Dorsolateral prefrontal cortex (tissue), 120 donors: ENCODE measurements at regions of chr11 and their contacts with region 1.

Region 1: DNA sequence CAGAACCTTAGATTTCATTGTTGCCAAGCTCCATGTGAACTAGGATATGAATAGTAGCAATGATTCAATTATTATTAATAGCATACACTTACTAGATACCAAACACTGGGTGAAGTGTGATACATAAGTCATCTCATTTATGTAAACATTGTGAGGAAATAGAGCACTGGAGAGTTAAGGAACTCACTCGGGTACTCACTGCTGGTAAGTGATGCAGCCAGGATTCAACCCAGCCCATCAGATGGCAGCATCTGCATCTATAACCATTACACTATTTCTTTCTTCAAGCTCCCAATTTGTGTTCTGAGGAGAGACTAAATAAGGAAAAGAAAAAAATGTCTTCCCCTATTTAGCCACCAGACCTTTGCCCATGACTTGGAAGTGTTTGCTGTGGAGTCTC is 10.2 kb upstream of the ALG8 start:
- DNase-seq: peak in 4 of 10 donors; percentile 25 to 61 (median 56)
- H3K4me3 ChIP-seq: no peak overlapping the region
- H3K27ac ChIP-seq: no peak overlapping the region
- H3K27me3 ChIP-seq: no peaks in the 10 kb centered on the region
- CTCF ChIP-seq: peak in 53 of 56 donors; percentile 14 to 73 (median 52)

Region 2: DNA sequence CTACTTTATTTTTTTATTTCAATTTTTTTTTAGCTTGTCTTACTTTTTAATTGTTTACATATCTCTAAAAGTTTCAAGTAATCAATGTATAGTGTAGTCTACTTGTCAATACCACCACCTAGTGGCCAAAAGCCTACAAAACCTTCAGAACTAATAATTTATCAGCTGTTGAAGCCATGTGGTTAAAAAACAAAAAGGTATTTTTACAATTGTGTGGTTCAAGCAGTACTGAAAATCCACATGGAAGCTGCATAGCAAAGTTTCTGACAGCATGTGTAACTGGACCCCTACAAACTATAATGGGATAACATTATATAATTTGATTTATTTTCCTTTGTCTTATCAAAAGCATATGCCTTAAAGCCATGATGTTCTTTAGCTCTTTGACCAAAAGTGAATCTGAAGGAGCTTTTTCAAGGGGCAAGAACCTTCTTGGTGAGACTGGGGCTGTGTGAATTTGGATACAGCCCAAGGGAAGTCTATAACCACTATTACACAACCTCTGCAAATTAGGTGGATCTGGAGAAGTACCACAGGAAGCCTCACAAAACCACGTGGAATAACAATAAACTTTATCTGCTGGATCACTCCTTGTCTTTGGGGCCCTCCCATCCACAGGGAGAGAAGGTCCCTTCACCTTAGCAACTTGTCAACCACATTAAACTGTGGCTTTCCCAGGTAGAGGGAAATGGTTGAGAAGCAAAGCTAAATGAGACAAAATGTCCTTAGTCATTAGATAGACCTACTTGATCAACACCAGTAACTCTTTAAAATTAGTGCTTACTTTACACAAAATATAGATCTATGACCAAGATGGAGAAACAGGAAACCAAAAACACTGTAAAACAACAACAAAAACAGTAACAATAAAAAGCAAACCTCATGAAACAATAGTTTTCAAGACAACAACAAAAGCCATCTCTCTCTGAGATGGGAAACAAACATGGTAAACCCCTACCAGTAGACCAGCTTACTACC is 415.1 kb after region 1 on chr11:
- intact Hi-C with region 1: loop called in 1 of 2 experiments (anchors 2 kb)
- DNase-seq: peak in 1 of 10 donors; percentile 11
- H3K4me3 ChIP-seq: no peak overlapping the region
- H3K27ac ChIP-seq: no peak overlapping the region
- H3K27me3 ChIP-seq: no peaks in the 10 kb centered on the region
- CTCF ChIP-seq: peak; percentile 64 to 87 (median 76)